ENCODE measurements at regions of chr3 and their contacts with region 1.

Region 1: GRCh38 chr3:184371570-184372018 is 6.4 kb downstream of the THPO start:
- DNase-seq: peak; percentile 82
- ATAC-seq: peak; percentile 88

Region 2: GRCh38 chr3:184066211-184066610 is 305.4 kb before region 1 on chr3:
- intact Hi-C with region 1: no loop called
- DNase-seq: no peak
- ATAC-seq: no peak

Region 3: DNA sequence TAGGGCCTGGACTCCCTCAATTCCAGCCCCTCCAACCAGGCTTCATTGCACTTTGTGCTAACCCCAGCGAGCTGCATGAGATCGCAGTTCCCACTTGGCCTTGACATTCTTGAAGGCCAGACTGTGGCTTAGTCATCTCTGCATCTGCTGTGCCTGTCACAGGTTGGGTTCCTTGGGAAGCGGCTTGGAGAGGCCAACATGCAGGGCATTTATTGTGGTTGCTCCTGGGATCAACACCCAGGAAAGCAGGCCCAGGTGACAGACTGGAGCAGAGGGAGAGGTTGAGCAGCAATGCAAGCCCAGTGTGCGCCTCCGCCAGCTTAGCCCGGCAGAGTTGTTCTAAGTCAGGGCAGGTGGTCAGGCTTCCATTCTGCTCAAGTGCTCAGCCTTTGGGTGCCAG is 175.1 kb before region 1 on chr3:
- intact Hi-C with region 1: no loop called
- DNase-seq: no peak
- ATAC-seq: no peak

Region 4: DNA sequence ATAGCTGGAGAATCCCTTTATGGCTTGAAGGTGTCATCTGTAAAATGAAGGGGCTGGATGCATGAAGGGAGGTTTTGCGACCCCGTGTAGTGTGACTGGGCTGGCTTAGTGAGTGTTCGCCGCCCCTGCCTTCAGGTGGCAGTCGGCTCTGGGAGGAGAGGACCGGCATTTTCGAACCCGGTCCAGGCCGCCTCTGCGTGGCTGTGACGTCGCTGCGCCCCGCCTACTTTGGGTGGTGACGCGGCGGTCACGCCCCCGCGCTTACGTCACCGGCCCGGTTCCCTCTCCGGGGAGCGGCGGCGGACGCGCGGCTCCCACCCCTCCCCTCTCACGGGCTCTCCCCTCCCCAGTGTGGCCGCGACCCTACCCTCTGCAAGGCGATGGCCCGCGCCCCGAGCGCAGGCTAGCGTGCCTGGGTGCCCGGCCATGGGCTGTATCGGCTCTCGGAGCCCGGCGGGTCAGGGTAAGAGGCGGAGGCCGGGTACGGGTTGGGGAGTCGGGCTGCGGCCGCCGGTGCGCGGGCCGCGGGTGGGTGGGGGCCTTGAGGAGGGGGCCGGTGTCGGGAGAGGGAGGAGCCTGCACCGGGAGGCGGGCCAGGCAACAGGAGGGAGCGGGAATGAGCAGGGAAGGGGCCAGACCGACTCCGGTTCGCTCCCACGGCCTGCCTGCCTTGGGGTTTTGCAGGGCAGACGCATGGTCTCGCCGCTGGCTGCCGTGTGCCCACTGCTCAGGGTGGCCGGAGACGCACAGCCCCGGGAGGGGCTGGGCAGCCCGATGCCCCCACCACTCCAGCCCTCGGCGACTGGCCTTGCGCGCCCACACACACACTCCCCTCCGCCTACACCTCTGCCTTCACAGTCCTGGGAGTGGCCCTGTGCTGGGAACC is 35.7 kb before region 1 on chr3:
- intact Hi-C with region 1: no loop called
- DNase-seq: peak; percentile 94
- ATAC-seq: peak; percentile 70

Region 5: DNA sequence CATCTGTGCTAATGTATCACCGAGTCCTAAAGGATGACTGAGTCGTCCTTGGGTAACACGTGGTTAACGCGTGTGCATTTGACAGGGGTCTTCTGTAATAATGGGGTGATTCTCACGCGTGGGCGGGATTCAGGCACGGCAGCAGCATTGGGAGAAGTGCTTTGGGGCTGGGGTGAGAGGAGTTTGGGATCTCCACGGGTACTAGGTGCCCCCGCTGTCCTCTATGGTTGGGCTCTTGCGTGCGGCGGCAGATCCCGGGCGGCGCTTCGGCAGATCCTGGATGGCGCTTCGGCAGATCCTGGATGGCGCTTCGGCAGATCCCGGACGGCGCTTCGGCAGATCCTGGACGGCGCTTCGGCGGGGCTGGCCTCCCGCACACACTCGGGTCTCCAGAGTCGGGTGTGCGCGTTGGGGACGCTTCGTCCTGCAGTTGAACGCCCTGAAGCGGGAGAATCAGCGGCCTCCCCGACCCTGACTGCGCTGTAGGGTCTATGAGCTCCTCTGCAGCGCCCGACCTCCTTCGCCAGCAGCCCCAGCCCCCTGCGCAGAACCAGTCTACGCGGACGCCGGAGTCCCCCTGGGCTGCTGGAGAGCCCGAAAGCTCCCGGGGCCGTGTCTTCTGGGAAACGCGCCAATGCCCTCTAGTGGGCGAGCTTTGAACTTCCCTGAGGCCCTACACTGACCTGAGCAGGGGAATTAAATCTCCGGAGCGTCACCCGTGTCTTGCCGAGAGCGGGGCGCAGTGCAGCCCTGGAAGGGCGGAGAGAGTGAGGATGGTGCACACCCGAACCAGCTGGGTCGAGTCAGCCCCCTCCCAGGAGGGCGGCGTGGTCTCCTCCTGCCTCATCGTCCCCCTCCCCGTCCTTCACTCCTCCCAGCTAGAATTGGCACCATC is 141.9 kb after region 1 on chr3:
- intact Hi-C with region 1: loop called (anchors 10 kb)
- DNase-seq: peak; percentile 89
- ATAC-seq: peak; percentile 99

Region 6: DNA sequence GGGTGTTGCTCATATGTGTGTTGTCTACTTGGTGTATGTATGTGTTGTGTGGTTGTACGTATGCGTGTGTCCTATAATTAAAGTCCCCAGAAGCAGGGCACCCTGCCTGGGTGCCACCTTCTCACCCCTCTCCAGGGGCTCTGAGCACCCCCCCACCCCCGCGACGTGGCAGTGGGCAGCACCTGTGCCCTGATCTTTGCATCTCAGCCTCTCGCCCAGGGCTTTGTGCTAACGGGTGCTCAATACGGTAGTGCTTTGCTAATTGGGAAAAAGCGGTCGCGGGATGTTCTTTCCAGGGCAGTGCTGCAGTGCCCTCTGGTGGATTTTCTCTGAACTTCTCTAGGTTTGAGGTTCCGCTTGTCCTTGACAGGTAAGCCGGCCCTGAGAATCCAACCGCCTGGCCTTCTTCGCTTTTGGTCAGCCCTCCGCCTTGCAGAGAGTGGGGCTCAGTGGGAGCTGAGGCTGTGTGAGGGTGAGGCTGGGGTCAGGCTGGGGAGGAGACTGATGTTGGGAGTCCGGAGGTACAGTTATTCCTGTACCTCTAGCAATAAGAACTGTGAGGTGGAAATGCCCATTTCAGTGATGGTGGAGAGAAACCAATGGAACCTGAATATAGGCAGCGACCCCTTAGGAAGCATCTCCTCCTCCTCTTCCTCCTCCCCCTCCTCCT is 172.4 kb after region 1 on chr3:
- intact Hi-C with region 1: loop called (anchors 10 kb)
- DNase-seq: no peak
- ATAC-seq: peak; percentile 79

Measured in left ventricle myocardium superior (tissue), 1 donor.